ENCODE measurements at regions of chr19 and their contacts with region 1.

Region 1: DNA sequence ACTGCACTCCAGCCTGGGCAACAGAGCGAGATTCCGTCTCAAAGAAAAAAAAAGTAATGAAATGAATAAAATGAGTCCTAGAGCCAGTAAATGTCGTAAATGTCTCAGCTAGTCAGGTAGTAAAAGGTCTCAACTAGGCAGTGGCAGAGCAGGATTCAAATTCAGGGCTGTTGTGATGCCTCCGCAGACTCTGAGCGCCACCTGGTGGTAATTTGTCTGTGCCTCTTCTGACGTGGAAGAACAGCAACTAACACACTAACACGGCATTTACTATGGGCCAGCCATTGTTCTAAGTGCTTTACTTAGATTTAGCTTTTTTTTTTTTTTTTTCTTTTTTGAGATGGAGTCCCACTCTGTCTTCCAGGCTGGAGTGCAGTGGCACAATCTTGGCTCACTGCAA is 30.2 kb downstream of the CYP2F1 start:
- DNase-seq: peak; percentile 82 to 96
- ATAC-seq: peak; percentile 94

Region 2: DNA sequence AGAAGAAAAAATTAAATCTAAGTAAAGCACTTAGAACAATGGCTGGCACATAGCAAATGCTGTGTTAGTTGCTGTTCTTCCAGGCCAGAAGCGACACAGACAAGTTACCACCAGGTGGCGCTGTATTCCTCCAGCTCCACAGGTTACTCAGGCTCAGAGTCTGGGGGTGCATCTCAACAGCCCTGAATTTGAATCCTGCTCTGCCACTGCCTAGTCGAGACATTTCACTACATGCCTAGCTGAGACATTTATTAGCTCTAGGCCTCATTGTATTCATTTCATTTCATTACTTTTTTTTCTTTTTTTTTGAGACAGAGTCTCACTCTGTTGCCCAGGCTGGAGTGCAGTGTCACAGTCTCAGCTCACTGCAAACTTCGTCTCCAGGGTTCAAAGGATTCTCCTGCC is 169.8 kb before region 1 on chr19:
- intact Hi-C with region 1: loop called in 1 of 2 experiments (anchors 5 kb)
- DNase-seq: peak; percentile 63 to 83
- ATAC-seq: peak; percentile 90

Region 3: DNA sequence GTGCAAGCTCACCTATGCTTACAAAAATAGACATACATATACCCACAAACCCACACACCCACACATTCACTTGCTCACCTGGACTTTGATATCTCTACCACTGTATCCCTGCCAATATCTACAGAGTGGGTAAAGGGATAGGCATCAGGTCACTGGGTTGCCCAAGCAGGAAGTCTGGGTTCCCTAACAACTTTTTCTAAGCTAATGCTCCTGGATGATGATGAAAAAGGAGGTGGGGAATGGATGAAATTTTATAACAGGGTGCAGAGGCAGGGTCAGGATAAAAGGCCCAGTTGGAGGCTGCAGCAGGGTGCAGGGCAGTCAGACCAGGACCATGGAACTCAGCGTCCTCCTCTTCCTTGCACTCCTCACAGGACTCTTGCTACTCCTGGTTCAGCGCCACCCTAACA is 153.4 kb before region 1 on chr19 and contains the start of gene CYP2B6:
- intact Hi-C with region 1: no loop called
- DNase-seq: peak; percentile 34 to 42
- ATAC-seq: peak; percentile 97
- total RNA-seq, gene CYP2B6: 4.6 to 5.1 TPM

Region 4: DNA sequence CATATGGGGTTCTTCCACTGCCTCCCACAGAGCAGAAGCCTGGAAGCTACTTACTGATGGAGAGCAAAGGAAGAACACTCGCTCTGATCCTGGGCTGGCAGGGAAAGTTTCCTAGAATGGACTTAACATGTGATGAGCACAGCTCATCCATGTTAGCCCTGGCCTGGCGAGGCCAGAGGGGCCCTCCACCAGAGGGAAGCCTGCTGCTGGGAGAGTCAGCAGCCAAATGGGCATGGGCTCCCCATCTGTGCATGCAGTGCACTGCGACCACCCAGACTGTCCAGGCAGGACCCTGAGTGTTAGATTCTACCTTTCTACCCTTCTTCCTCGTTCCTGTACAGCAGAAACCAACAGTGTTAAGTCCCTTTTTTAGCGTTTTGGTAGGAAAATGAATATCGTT is 128.7 kb after region 1 on chr19:
- intact Hi-C with region 1: no loop called
- DNase-seq: no peak
- ATAC-seq: no peak

Region 5: DNA sequence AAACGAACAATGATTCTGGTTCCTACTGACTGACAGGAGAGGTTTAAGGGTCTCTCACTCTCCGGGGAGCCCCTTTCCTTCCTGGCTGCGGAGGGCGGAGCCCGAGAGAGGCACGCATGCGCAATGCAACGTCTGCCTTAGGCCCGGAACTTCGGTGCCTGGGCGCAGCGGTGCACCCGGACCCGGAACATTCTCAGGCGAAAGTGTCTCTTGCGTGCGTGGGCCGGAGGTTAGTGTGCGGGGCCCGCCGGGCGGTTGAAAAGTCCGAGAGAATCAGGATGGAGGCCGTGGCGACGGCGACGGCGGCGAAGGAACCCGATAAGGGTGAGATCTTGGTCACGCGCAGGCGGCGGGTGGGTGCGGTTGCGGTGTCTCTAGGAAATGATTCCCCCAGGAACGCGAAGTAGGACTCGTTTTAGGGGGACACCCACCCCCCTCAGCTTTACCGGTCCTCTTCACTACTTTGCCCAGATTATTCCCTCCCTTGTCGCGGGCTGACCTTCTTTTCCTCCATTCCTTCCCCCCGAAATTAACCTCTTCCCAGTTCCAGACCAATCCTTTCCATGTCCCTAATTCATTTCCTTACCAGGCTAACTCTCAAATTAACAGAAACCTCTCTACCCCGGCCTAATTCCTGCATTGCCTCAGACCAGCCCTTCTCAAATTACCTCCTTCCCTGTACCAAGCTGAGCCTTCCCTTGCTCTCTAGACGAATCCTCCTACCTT is 165.8 kb after region 1 on chr19 and contains the start of gene CCDC97:
- intact Hi-C with region 1: no loop called
- DNase-seq: peak; percentile 83 to 88
- ATAC-seq: peak; percentile 82
- total RNA-seq, gene CCDC97: 24.1 to 26.3 TPM

Measured in left colon (tissue), 2 donors.